Mammary epithelial cell (primary cell): ENCODE measurements at regions of chr17 and their contacts with region 1.

Region 1: GRCh38 chr17:4187076-4187475 is 44.1 kb downstream of the CYB5D2 start:
- DNase-seq: peak; percentile 99
- H3K4me3 ChIP-seq: peak overlapping the region in 2 of 3 experiments; percentile 5 to 19
- H3K27ac ChIP-seq: peak overlapping the region; percentile 80
- H3K4me1 ChIP-seq: peaks cover 20% of the 10 kb centered on the region
- H3K27me3 ChIP-seq: no peaks in the 10 kb centered on the region
- CTCF ChIP-seq: no peak

Region 2: DNA sequence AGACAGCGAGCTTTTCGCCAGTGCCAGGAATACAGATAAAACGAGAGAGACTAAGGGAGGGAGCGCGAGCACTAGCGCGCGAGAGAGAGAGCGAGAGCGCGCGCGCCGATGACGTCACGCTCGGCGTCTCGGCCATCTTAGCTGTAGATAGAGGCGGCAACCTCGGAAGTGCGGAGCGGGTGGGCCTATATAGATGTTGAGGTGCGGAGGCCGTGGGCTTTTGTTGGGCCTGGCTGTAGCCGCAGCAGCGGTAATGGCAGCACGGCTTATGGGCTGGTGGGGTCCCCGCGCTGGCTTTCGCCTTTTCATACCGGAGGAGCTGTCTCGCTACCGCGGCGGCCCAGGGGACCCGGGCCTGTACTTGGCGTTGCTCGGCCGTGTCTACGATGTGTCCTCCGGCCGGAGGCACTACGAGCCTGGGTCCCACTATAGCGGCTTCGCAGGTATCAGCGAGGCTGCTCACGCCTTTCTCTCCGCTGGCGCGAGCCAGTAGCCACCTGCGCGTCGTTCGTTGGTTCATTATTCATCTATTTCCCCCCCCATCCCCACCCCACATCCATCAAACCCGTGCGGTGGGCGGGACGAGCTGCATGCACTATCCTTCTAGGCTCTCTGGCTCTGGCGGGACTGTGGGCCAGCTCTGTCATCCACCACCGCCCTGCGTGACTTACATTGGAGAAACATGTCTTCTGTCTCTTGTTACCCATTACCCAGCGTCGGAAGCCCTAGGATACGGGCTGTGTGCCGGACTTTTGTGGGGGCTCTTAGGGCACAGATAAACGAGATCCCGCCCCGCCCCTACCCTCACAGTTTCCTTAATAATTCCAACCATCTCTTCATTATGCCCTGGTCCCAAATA is 43.3 kb before region 1 on chr17:
- CTCF ChIA-PET with region 1: no interaction called
- dilution Hi-C with region 1: no loop called
- in situ Hi-C with region 1: no loop called
- intact Hi-C with region 1: loop called (anchors 1 kb)
- DNase-seq: peak; percentile 88
- H3K4me3 ChIP-seq: peak overlapping the region; percentile 69 to 82 (median 73)
- H3K27ac ChIP-seq: peak overlapping the region; percentile 88
- H3K4me1 ChIP-seq: peaks cover 7% of the 10 kb centered on the region
- H3K27me3 ChIP-seq: no peaks in the 10 kb centered on the region
- CTCF ChIP-seq: no peak

Region 3: DNA sequence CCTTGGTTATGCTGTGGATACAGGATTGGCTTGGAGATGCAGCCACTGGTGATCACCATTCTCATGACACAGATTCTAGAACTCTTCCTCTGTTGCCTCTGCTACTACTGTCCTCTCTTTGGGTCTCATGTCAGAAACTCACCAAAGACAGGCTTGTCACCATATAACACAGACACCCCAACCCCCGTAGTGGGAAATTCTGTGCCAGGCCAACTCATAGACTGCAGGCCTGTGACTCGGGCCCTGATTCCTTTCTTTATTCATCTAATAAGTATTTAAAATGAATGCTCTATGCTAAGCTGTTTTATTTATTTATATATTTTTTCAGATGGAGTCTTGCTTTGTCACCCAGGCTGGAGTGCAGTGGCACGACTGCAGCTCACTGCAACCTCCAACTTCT is 34.6 kb before region 1 on chr17:
- CTCF ChIA-PET with region 1: no interaction called
- dilution Hi-C with region 1: loop called (anchors 5 kb)
- in situ Hi-C with region 1: no loop called
- intact Hi-C with region 1: no loop called
- DNase-seq: peak; percentile 77
- H3K4me3 ChIP-seq: no peak overlapping the region
- H3K27ac ChIP-seq: no peak overlapping the region
- H3K4me1 ChIP-seq: no peaks in the 10 kb centered on the region
- H3K27me3 ChIP-seq: no peaks in the 10 kb centered on the region
- CTCF ChIP-seq: no peak

Region 4: GRCh38 chr17:4161179-4161559 is 25.9 kb before region 1 on chr17:
- CTCF ChIA-PET with region 1: no interaction called
- dilution Hi-C with region 1: no loop called
- in situ Hi-C with region 1: no loop called
- intact Hi-C with region 1: loop called (anchors 1 kb)
- DNase-seq: peak; percentile 90
- H3K4me3 ChIP-seq: no peak overlapping the region
- H3K27ac ChIP-seq: peak overlapping the region; percentile 68
- H3K4me1 ChIP-seq: peaks cover 37% of the 10 kb centered on the region
- H3K27me3 ChIP-seq: no peaks in the 10 kb centered on the region
- CTCF ChIP-seq: peak; percentile 29 to 57

Region 5: GRCh38 chr17:4199818-4200402 is 12.8 kb after region 1 on chr17:
- CTCF ChIA-PET with region 1: interaction called, 10 read pairs
- dilution Hi-C with region 1: no loop called
- in situ Hi-C with region 1: no loop called
- intact Hi-C with region 1: no loop called
- DNase-seq: peak; percentile 13
- H3K4me3 ChIP-seq: no peak overlapping the region
- H3K27ac ChIP-seq: no peak overlapping the region
- H3K4me1 ChIP-seq: no peaks in the 10 kb centered on the region
- H3K27me3 ChIP-seq: no peaks in the 10 kb centered on the region
- CTCF ChIP-seq: peak; percentile 78 to 80